ENCODE measurements at regions of chr4 and their contacts with region 1.

Region 1: GRCh38 chr4:28176939-28177338 is 1316.3 kb downstream of the STIM2 start:
- DNase-seq: no peak
- H3K4me3 ChIP-seq: no peak overlapping the region
- H3K27ac ChIP-seq: no peak overlapping the region
- H3K4me1 ChIP-seq: no peaks in the 10 kb centered on the region
- H3K27me3 ChIP-seq: no peaks in the 10 kb centered on the region
- CTCF ChIP-seq: no peak

Region 2: GRCh38 chr4:28435314-28435713 is 258.4 kb after region 1 on chr4:
- CTCF ChIA-PET with region 1: no interaction called
- POLR2A ChIA-PET with region 1: interaction called, 12 read pairs
- intact Hi-C with region 1: no loop called
- DNase-seq: no peak
- H3K4me3 ChIP-seq: no peak overlapping the region
- H3K27ac ChIP-seq: no peak overlapping the region
- H3K4me1 ChIP-seq: no peaks in the 10 kb centered on the region
- H3K27me3 ChIP-seq: no peaks in the 10 kb centered on the region
- CTCF ChIP-seq: no peak